Posterior vena cava (tissue), 2 donors: ENCODE measurements at regions of chr2 and their contacts with region 1.

Region 1: GRCh38 chr2:26139269-26140183 is 33.4 kb upstream of the GAREM2 start:
- DNase-seq: no peak

Region 2: GRCh38 chr2:26122630-26123029 is 16.9 kb before region 1 on chr2:
- intact Hi-C with region 1: loop called in 1 of 2 experiments (anchors 2 kb)
- DNase-seq: no peak

Region 3: DNA sequence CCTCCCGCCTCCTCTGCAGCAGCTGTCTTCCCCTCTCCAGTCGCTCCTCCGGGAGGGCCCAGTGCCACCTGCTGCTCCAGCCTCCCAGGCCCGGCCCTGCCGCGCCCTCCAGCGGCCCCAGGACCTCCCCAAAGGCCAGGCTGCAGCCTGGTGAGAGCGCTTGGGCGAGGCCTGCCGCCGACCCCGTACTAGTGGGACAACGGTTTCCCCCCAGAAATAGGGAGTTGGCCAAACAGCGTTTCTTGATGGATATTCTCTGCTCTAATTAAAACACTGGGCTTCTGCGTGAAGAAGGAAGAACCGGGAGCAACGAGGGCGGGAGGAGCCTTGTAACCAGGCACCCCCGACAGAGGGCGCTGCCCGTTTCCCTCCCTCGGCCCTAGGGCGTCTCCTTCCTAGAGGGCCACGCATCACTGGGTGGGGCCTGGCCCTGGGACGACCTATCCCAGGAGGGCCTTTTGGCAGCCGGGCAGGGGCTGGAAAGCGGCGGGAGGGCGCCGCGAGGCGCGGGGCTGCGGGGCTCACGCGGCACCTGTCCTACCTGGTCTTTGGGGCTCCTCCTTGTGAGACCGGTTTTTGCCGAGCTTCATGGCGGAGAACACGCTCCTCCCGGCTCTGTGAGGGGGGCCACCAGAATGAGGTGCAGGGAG is 363.8 kb after region 1 on chr2:
- intact Hi-C with region 1: no loop called
- DNase-seq: peak; percentile 93